Ovary (tissue), 10 donors: ENCODE measurements at regions of chr20 and their contacts with region 1.

Region 1: DNA sequence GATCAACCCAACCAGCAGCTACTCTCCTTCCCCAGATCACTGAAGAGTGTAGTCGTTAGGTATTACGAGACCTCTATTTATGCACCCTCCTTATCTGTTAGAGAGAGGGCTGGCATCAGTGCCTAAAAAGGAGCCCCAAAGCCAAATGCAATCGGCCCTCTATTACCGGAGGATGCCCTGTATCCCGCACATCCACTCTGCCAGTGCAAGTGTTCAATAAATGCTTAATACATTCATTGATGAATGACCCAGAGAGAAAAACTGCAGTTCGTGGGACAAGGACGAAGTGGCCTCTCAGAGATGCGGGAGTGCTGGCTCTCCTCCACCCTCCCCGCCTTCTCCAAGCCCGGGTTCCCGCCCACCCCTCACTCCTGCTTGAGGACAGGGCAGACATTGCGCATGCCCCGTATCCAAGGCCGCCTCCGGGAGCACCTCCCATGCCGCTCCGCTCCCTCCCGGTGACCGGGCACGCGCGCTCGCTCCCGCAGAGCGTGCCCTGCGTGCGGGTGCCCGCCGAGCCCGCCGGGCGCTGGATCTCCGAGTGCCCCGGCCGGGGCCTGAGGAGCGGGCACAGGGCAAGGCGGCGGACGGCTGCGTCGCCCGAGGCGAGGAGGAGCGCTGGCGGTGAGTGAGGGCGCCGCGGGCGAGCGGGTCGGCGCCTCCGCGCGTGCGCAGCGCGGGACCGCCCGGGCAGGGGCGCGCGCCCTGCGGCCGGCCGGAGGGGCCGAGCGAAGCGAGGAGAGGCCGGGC is 27.2 kb upstream of the BTBD3 start:
- DNase-seq: peak; percentile 85 to 92 (median 90)
- H3K4me3 ChIP-seq: peak overlapping the region; percentile 83
- H3K27ac ChIP-seq: peak overlapping the region; percentile 90 to 94
- H3K4me1 ChIP-seq: peaks cover 8% of the 10 kb centered on the region
- H3K27me3 ChIP-seq: no peaks in the 10 kb centered on the region
- CTCF ChIP-seq: no peak
- EP300 ChIP-seq: no peak
- POLR2A ChIP-seq: peak; percentile 58

Region 2: DNA sequence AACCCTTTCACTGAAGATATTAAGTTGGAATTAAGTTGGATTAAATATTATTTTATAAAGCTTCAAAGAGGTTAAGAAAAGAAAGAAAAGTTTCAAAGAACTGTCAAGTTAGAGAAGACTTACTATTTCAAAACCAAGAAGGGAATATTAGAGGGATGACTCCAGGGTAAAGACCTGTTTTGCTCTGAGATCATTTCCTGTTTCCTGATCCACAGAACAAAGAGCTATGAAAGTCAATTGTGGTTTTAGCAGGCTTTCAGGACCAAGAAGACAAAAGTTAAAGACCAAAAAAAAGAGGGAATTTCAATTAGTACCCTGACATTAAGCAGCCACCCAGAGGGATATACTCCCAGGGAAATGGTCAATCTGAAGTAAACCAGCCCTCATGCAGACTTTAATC is 1874.8 kb after region 1 on chr20:
- intact Hi-C with region 1: loop called in 1 of 4 experiments (anchors 10 kb)
- DNase-seq: no peak
- H3K4me3 ChIP-seq: no peak overlapping the region
- H3K27ac ChIP-seq: no peak overlapping the region
- H3K4me1 ChIP-seq: no peaks in the 10 kb centered on the region
- H3K27me3 ChIP-seq: no peaks in the 10 kb centered on the region
- CTCF ChIP-seq: no peak
- EP300 ChIP-seq: no peak
- POLR2A ChIP-seq: no peak